Tibial artery (tissue), 4 donors: ENCODE measurements at regions of chr11 and their contacts with region 1.

Region 1: DNA sequence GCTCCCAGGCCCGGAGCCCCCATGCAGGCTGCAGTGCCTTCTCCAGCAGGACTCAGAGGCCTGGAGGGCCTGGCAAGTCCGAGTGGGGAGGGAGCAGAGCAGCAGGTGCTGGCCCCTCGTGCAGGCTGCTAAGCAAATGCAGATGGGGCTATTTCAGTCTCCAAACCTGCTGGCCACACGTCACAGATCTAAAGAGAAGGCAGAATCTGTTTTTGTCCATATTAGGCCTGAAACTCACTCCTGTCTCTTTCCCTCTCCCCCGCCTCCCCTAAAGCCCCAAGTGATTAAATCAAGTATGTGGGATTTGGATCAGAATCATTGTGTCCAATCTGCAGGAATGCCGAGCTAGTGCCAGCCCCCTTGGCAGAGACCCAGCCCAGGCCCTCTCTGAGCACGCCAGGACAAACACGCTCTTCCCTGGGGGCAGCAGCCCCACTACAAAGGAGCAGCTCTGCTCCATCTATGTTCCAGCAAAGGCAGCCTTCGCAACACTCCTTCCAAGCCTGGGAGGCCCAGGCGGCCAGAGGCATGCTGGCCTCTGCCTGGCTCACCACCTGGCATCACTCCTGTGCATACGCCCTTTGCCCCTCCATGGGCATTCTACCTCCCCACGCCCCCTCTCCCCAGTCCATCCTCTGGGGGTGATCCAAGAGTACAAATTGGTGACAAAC is 26.5 kb downstream of the RPL27A start:
- DNase-seq: peak; percentile 93 to 99
- H3K4me3 ChIP-seq: no peak overlapping the region
- H3K27ac ChIP-seq: peak overlapping the region; percentile 93
- H3K4me1 ChIP-seq: peaks cover 13 to 62% (median 36%) of the 10 kb centered on the region in 4 donors
- H3K27me3 ChIP-seq: no peaks in the 10 kb centered on the region
- CTCF ChIP-seq: no peak

Region 2: DNA sequence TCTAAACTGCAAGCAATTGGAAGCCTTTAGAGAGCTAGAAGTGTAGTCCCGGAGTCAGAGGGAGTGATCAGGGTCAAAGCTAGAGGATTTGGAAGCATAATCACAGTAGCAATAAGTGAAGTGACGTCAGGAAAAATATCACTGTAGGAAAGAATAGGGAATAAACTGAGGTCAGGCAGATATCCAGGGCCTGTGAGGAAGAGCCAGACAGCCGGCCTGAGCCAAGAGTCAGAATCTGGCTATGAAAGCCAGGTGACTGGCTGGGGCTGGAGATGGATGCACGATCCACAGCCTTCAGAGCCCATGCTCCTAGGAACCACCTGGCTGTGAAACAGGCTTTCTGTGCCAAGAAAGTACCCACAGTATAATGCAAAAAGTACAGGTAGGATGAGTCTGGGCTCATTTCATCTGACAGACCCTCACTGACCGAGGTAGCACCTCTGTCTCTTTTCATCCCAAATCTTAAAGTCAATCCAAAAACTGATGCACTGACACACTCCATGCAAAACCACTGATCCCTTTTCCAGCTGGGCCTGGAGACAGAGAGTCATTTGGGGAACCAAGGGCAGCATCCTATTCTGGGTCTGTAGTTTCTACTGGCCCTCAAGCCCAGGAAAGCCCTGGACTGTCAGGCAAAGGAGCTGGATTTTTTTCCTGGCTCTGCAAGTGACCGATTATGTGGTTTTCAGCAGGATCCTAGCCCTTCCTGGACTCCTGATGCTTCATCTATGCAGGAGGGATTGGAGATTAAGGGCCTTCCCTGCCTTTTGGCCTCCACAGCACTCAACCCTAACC is 47.9 kb before region 1 on chr11:
- intact Hi-C with region 1: no loop called
- DNase-seq: no peak
- H3K4me3 ChIP-seq: no peak overlapping the region
- H3K27ac ChIP-seq: no peak overlapping the region
- H3K4me1 ChIP-seq: peaks cover 0 to 8% (median 2%) of the 10 kb centered on the region in 4 donors
- H3K27me3 ChIP-seq: no peaks in the 10 kb centered on the region
- CTCF ChIP-seq: no peak

Region 3: DNA sequence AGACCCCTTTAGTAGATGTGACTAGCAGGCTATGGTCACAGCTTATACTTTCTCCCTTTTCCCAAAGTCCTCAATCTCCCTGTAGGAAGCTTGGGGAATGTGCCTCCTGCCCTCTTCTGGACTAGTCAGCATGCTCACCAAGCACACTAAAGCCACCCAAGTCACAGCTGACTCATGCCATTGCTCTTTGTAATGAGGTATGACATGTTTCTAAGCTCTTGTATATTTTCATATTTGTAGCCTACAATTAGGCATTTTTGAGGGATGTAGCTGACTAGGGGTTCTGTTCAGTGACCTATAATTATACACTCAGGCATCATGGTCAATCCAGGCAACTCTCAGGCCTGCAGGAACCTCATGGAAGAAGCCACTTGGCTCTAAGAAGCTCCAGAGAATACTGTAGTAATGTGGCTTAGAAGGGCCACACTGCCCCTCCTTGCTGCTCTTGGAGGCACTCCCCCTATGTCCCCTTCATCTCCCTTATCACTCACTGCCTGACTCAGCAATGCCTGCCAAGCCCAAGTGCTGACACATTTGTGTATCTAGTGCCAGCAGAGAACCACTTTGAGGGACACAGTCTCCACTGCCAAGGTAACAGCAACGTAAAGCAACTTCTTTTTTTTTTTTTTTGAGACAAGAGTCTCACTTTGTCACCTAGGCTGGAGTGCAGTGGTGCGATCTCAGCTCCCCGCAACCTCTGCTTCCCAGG is 59.6 kb after region 1 on chr11:
- intact Hi-C with region 1: loop called (anchors 10 kb)
- DNase-seq: peak; percentile 51 to 80
- H3K4me3 ChIP-seq: no peak overlapping the region
- H3K27ac ChIP-seq: peak overlapping the region; percentile 62 to 84
- H3K4me1 ChIP-seq: peaks cover 0 to 95% (median 60%) of the 10 kb centered on the region in 4 donors
- H3K27me3 ChIP-seq: no peaks in the 10 kb centered on the region
- CTCF ChIP-seq: peak; percentile 39 to 40